ENCODE measurements at regions of chr6 and their contacts with region 1.

Region 1: DNA sequence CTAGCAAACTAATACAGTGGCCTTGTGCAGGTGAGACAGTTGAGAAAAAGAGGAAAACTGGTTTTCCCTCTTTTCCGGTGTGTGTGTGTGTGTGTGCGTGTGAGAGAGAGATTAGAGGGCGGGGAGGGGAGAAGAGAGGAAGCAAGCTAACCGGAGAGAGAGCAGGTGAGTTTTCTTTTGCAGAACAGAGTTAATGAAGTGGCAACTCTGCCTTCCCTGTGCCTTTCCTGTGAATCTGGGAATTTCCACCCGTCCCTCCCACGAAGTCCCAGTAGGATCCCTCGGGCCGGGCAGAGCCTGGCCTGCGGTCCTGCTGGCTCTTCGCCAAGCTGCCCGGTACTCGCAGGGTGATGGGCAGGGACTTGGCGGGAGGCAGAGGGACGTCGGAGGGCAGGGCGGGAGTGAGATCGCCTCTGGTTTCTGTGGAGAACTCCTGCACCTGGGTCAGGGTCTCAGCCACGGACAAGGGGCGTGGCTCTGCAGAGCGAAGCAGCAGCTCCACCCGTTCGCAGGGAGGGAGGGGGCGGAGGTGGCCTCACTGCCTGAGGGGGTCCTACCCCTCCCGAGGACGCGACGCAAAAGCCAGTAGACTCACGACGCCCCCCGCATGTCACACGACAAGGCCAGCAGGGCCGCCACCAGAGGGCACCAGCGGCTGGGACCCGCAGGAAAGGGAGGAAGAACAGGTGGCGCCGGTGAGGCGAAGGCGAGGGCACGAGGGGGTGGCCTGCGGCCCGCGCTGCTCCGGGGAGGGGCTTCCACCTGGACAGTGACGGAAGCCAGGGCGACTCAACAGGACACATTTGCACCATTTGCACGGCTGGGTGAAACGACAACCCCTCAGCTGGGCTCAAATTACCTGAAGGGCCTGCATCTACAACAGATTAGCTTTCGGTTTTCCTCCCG is 51.2 kb upstream of the RNF182 start:
- DNase-seq: peak; percentile 80 to 87 (median 83)
- H3K4me3 ChIP-seq: peak overlapping the region; percentile 2 to 75 (median 44)
- H3K27ac ChIP-seq: no peak overlapping the region
- H3K4me1 ChIP-seq: peaks cover 0 to 23% (median 15%) of the 10 kb centered on the region in 4 experiments
- H3K27me3 ChIP-seq: no peaks in the 10 kb centered on the region

Region 2: GRCh38 chr6:13859871-13860555 is 13.5 kb before region 1 on chr6:
- CTCF ChIA-PET with region 1: interaction called, 10 read pairs
- POLR2A ChIA-PET with region 1: no interaction called
- DNase-seq: peak in 1 of 3 donors; percentile 30
- H3K4me3 ChIP-seq: peak overlapping the region in 5 of 7 experiments; percentile 15 to 55 (median 39)
- H3K27ac ChIP-seq: no peak overlapping the region
- H3K4me1 ChIP-seq: peaks cover 0 to 8% (median 3%) of the 10 kb centered on the region in 4 experiments
- H3K27me3 ChIP-seq: peaks cover 0 to 33% (median 7%) of the 10 kb centered on the region in 5 experiments

Region 3: DNA sequence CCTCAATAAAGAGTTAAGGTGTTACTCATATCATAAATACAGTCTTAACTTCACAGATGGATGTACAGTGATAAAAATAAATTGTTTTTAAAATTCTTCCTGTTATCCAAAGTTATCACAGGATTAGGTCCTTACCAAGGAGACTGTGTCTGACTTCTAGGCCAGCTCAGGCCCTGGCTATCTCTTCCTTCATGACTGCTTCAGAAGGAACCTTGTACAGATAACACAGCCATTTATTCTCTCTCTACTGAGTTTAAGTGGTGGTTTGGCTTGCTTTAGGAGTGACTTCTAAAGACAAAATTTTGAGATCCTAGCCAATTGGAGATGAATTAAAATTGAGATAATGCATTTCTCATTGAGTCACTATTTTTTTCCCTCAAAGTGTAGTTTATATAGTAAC is 10.4 kb after region 1 on chr6:
- CTCF ChIA-PET with region 1: interaction called, 12 read pairs
- POLR2A ChIA-PET with region 1: no interaction called
- DNase-seq: no peak
- H3K4me3 ChIP-seq: no peak overlapping the region
- H3K27ac ChIP-seq: no peak overlapping the region
- H3K4me1 ChIP-seq: no peaks in the 10 kb centered on the region
- H3K27me3 ChIP-seq: no peaks in the 10 kb centered on the region